ENCODE measurements at regions of chr7 and their contacts with region 1.

Region 1: GRCh38 chr7:87933945-87934698 is at the start of gene ADAM22:
- DNase-seq: peak; percentile 83 to 93
- ATAC-seq: peak; percentile 90 to 99 (median 98)
- H3K4me3 ChIP-seq: peak within 1 kb of the TSS; percentile 80
- H3K27ac ChIP-seq: peak within 1 kb of the TSS; percentile 11
- H3K4me1 ChIP-seq: peaks cover 4% of the 10 kb centered on the region
- H3K27me3 ChIP-seq: no peaks in the 10 kb centered on the region
- CTCF ChIP-seq: no peak
- total RNA-seq, gene ADAM22: 0.42 to 7.0 (median 1.0) TPM

Region 2: DNA sequence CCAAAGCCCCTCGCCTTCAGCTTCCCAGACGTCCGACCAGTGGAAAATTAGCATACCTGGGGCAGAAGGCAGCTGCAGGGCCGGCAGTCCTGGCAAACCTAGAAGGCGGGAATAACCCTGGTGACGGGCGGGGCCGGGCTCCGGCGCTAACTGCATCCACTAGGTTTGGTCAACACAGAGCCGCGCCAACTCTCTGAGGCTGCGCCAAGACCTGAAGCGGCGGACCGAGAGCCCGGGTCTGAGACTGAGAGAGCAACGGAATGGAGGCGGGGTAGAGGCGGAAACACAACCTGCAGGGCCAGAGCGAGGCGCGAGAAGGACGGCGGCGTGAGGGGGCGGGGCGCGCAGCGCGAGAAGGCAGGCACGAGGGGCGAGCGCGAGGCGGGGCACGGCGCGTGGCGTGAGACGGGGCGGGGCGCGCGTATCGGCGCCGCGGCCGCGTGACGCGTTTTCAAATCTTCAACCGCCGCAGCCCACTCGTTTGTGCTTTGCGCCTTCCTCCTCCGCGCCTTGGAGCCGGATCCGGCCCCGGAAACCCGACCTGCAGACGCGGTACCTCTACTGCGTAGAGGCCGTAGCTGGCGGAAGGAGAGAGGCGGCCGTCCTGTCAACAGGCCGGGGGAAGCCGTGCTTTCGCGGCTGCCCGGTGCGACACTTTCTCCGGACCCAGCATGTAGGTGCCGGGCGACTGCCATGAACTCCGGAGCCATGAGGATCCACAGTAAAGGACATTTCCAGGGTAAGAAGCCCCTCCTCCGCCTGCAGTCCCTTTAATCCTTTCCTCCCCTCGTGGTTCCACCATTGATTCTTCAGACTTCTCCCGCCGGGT is 57.9 kb before region 1 on chr7 and contains the starts of genes DBF4 and SLC25A40:
- intact Hi-C with region 1: loop called (anchors 5 kb)
- DNase-seq: peak; percentile 96 to 97
- ATAC-seq: peak; percentile 97 to 98 (median 98)
- H3K4me3 ChIP-seq: peak within 1 kb of the TSS; percentile 88
- H3K27ac ChIP-seq: peak within 1 kb of the TSS; percentile 93
- H3K4me1 ChIP-seq: peaks cover 31% of the 10 kb centered on the region
- H3K27me3 ChIP-seq: no peaks in the 10 kb centered on the region
- CTCF ChIP-seq: no peak
- total RNA-seq, gene DBF4: 1.5 to 4.1 (median 2.0) TPM
- total RNA-seq, gene SLC25A40: 5.8 to 11.2 (median 8.2) TPM

Region 3: DNA sequence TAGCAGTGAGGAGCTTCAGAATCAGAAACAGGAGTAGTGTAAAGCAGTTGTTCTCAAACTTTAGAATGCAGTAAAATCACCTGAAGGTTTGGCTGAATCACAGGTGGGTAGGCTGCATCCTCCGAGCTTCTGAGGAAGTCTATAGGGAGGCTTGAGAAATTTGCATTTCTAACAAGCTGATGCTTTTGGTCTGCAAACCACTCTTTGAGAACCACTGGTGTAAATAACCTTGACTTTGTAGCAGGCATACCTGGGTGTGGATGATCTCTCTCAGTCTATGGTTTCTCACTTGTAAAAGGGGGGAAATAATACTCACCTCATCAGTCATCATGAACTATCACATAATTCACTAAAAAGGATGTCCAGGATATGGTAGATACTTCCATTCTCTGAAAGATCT is 167.6 kb after region 1 on chr7:
- intact Hi-C with region 1: loop called in 1 of 2 experiments (anchors 10 kb)
- DNase-seq: no peak
- ATAC-seq: no peak
- H3K4me3 ChIP-seq: no peak overlapping the region
- H3K27ac ChIP-seq: no peak overlapping the region
- H3K4me1 ChIP-seq: no peaks in the 10 kb centered on the region
- H3K27me3 ChIP-seq: no peaks in the 10 kb centered on the region
- CTCF ChIP-seq: no peak